Heart left ventricle (tissue), 16 donors: ENCODE measurements at regions of chr6 and their contacts with region 1.

Region 1: GRCh38 chr6:112282221-112282620 is 27.9 kb upstream of the LAMA4 start:
- DNase-seq: peak in 4 of 5 donors; percentile 72 to 82 (median 78)
- ATAC-seq: peak; percentile 84 to 96 (median 94)
- H3K4me3 ChIP-seq: no peak overlapping the region
- H3K27ac ChIP-seq: peak overlapping the region in 11 of 12 donors; percentile 10 to 70 (median 45)
- H3K4me1 ChIP-seq: peaks cover 0 to 57% (median 35%) of the 10 kb centered on the region in 12 donors
- H3K27me3 ChIP-seq: no peaks in the 10 kb centered on the region
- CTCF ChIP-seq: peak in 11 of 12 donors; percentile 25 to 80 (median 52)
- POLR2A ChIP-seq: no peak

Region 2: DNA sequence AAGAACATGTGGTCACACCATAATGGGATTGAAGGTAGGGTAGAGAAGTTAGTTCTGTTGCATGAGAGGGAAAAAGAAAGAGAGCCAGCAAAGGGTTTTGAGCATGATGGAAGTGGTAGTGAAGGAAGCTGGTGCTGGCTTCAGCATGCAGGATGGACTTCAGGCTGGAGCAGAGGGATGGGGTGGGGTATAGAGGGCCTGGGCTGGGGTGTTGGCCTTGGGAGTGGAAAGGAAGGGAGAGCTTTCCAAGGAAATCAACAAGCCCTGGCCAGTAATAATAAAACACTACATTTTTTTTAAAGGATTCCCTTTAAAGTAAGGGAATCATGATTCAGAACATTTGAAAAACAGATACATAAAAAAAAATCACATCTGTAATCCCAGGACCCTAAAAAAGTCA is 89.1 kb before region 1 on chr6:
- intact Hi-C with region 1: loop called in 2 of 10 experiments (anchors 5 to 10 kb)
- DNase-seq: peak in 2 of 5 donors; percentile 32
- ATAC-seq: peak; percentile 40 to 66 (median 56)
- H3K4me3 ChIP-seq: no peak overlapping the region
- H3K27ac ChIP-seq: peak overlapping the region in 6 of 12 donors; percentile 3 to 49 (median 39)
- H3K4me1 ChIP-seq: peaks cover 0 to 67% (median 24%) of the 10 kb centered on the region in 12 donors
- H3K27me3 ChIP-seq: no peaks in the 10 kb centered on the region
- CTCF ChIP-seq: no peak
- POLR2A ChIP-seq: no peak

Region 3: DNA sequence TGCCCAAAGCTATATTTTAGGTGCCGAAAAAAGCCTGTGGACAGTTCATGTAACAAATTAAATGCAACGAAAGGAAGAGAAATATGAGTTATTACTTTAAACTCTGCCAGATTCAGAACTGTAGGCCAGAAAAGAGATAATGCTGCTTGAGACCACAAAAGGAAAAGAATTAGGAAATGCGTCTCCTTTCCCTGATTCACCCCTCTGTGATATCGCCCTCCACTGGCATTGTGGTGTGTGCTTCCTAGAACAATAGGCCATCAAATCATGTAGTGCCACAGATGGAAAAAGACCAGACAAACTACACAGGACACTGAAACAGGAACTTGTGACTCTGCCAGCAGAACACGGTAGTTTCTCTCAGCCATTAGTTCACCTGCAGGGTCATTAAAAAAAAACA is 13.1 kb before region 1 on chr6:
- intact Hi-C with region 1: no loop called
- DNase-seq: peak in 1 of 5 donors; percentile 34
- ATAC-seq: peak; percentile 57 to 75 (median 66)
- H3K4me3 ChIP-seq: no peak overlapping the region
- H3K27ac ChIP-seq: peak overlapping the region; percentile 6 to 80 (median 70)
- H3K4me1 ChIP-seq: peaks cover 0 to 31% (median 22%) of the 10 kb centered on the region in 12 donors
- H3K27me3 ChIP-seq: no peaks in the 10 kb centered on the region
- CTCF ChIP-seq: peak in 9 of 12 donors; percentile 11 to 58 (median 42)
- POLR2A ChIP-seq: no peak